Mammary epithelial cell (primary cell): ENCODE measurements at regions of chr17 and their contacts with region 1.

Region 1: DNA sequence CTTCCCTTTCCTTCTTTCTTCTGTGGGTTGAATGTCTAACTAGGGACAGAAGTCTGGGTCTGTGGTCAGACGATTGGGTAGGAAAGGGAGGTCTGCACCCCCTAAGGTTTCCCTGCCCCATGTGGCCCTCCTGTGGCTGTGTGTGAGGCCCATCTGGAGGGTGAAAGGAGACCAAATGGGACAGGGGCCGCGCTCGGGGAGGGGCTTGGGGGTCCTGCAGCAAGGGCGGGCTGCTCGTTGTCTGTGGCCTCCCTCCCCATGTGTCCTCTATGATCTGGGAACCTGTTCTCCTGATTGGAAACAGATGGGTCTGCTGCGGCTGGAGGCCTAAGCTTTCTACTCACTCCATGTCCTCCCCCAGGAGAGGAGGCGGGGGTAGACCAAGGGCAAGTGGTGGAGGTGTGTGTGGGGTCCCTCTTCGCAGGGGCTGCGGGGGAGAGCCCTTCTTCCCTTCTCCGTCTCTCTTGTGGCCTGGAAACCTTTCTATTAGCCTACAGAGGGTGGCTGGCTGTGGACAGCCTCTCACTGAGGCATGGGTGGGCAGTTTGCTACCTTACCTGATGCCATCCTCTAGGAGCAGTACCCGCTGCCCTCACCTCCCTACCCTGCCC is 18.6 kb downstream of the IGFBP4 start:
- DNase-seq: no peak
- H3K4me3 ChIP-seq: no peak overlapping the region
- H3K27ac ChIP-seq: no peak overlapping the region
- H3K4me1 ChIP-seq: peaks cover 11% of the 10 kb centered on the region
- H3K27me3 ChIP-seq: no peaks in the 10 kb centered on the region
- CTCF ChIP-seq: no peak

Region 2: DNA sequence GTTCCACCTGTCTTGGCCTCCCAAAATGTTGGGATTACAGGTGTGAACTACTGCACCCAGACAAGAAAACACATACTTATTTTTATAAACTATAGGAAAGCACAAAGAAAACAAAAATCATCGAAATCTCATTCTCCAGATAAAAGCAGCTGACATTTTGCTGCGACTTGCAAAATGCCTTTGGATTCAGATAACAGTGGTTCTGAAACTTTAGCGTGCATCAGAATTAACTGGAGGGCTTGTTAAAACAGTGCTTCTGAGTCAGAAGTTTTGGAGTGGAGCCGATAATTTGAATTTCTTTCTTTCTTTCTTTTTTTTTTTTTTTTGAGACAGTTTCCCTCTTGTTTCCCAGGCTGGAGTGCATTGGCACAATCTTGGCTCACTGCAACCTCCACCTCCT is 79.6 kb before region 1 on chr17:
- CTCF ChIA-PET with region 1: no interaction called
- dilution Hi-C with region 1: loop called (anchors 5 kb)
- in situ Hi-C with region 1: no loop called
- intact Hi-C with region 1: no loop called
- DNase-seq: no peak
- H3K4me3 ChIP-seq: no peak overlapping the region
- H3K27ac ChIP-seq: no peak overlapping the region
- H3K4me1 ChIP-seq: no peaks in the 10 kb centered on the region
- H3K27me3 ChIP-seq: no peaks in the 10 kb centered on the region
- CTCF ChIP-seq: no peak

Region 3: DNA sequence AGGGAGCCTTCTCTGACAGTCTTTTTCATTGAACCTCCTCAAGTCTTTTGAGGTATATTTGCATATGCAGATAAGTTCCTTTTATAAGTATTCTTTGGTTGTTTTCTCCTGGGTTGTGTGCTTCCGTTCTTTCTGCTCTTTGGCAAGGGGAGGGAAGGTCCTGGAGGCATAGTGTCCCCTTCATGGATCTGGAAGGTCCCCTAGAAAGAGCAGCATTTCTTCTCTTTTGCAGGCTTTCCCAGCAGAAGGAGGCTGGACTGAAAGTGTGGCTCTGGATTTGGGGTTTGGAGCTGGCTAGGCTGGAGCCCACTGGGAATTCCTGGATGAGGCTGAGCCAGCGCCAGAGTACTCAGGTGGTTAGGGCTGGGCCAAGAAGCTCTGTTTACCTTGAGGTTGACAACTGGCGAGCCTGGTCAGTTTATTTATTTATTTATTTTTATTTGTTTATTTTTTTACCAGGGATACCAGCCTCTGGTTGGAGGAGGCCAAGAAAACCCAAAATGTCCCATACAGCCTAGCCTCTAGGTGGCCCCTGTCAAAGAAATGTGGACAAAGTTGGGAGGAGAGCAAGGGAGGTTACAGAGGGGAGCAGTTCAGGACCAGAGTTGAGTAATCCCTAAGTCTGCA is 38.7 kb before region 1 on chr17:
- CTCF ChIA-PET with region 1: interaction called, 14 read pairs
- dilution Hi-C with region 1: loop called (anchors 5 kb)
- in situ Hi-C with region 1: no loop called
- intact Hi-C with region 1: no loop called
- DNase-seq: no peak
- H3K4me3 ChIP-seq: no peak overlapping the region
- H3K27ac ChIP-seq: no peak overlapping the region
- H3K4me1 ChIP-seq: no peaks in the 10 kb centered on the region
- H3K27me3 ChIP-seq: no peaks in the 10 kb centered on the region
- CTCF ChIP-seq: no peak